Activated T-helper 1 cell treated with anti-CD3 and anti-CD28 coated beads, Interleukin-12 subunit alpha, Interleukin-12 subunit beta, Interleukin-2, Interleukin-4 antibody, amounts not matched to agents 30 ng/mL and 10 ng/mL and 1 ng/mL, durations not matched to agents 14 hours and 24 hours and 36 hours (primary cell): ENCODE measurements at regions of chr14 and their contacts with region 1.

Region 1: GRCh38 chr14:56579345-56580220 is at the start of gene TMEM260:
- DNase-seq: peak; percentile 84
- H3K4me3 Mint-ChIP-seq: peak within 1 kb of the TSS; percentile 91
- H3K27ac Mint-ChIP-seq: peak within 1 kb of the TSS; percentile 91
- H3K4me1 Mint-ChIP-seq: peaks cover 32% of the 10 kb centered on the region
- H3K27me3 Mint-ChIP-seq: peaks cover under 1% of the 10 kb centered on the region
- total RNA-seq, gene TMEM260: 14.2 and 17.2 TPM in 2 replicates

Region 2: GRCh38 chr14:55807059-55807499 is 772.5 kb before region 1 on chr14:
- intact Hi-C with region 1: loop called (anchors 10 kb)
- DNase-seq: peak; percentile 70
- H3K4me3 Mint-ChIP-seq: peak overlapping the region; percentile 45
- H3K27ac Mint-ChIP-seq: peak overlapping the region; percentile 85
- H3K4me1 Mint-ChIP-seq: peaks cover 60% of the 10 kb centered on the region
- H3K27me3 Mint-ChIP-seq: no peaks in the 10 kb centered on the region

Region 3: GRCh38 chr14:57060276-57060955 is 480.8 kb after region 1 on chr14:
- intact Hi-C with region 1: loop called (anchors 1 kb)
- DNase-seq: peak; percentile 9
- H3K4me3 Mint-ChIP-seq: peak overlapping the region; percentile 37
- H3K27ac Mint-ChIP-seq: peak overlapping the region; percentile 85
- H3K4me1 Mint-ChIP-seq: peaks cover 48% of the 10 kb centered on the region
- H3K27me3 Mint-ChIP-seq: peaks cover 15% of the 10 kb centered on the region

Region 4: DNA sequence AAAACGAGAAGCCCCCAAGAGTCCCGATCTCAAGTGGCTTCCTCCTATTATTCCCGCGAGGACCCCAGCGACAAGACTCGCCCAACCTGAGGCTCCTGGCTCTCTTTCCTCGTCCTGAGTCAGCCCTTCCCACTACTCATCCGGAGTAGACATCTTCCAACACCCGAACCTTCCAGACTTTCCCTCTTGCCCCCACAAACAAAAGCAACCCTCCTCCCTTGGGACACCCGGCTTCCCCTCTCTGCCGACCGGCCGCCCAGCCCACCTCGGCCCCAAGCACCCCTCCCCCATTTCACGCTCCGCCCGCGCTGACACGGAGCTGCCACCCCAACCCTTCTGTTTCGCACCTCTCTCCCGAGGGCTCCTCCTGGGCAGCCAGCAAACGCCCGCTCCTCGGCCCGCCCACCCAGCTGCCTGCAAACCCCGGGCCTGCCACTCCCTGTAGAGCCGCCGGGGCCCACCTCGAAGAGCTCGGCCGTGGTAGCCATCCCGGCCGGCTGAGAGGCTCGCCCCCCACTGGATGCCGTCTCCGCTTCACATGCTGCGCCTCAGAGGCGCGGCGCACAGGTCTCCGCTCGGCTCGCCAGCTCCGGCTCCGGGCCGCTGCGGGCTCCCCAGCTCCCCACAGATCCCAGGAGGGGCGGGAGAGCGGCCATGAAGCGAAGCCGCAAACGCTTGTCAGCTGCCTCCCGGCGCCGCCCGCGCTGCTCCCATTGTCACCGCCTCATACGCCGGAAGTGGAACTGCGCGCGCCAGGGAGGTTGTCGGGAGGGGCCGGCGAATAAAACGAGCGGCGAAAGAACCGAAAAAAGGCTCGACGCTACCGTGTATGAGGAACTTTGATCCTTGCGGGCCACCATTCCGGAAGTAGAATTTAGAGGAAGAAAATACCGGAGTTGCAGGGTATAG is 688.8 kb after region 1 on chr14 and contains the starts of genes AP5M1 and EXOC5:
- intact Hi-C with region 1: loop called (anchors 1 kb)
- DNase-seq: peak; percentile 92
- H3K4me3 Mint-ChIP-seq: peak within 1 kb of the TSS; percentile 99
- H3K27ac Mint-ChIP-seq: peak within 1 kb of the TSS; percentile 100
- H3K4me1 Mint-ChIP-seq: peaks cover 60% of the 10 kb centered on the region
- H3K27me3 Mint-ChIP-seq: no peaks in the 10 kb centered on the region
- total RNA-seq, gene AP5M1: 38.7 and 48.2 TPM in 2 replicates
- total RNA-seq, gene EXOC5: 75.9 and 76.6 TPM in 2 replicates